Left ventricle myocardium inferior (tissue), 1 donor: ENCODE measurements at regions of chr11 and their contacts with region 1.

Region 1: GRCh38 chr11:4697585-4697984 is at the start of gene OR51E2:
- DNase-seq: no peak
- H3K4me3 ChIP-seq: no peak within 1 kb of the TSS
- H3K27ac ChIP-seq: no peak within 1 kb of the TSS
- H3K4me1 ChIP-seq: peaks cover 3% of the 10 kb centered on the region
- H3K27me3 ChIP-seq: no peaks in the 10 kb centered on the region
- CTCF ChIP-seq: no peak
- total RNA-seq, gene OR51E2: not detected

Region 2: GRCh38 chr11:4643076-4643475 is 54.5 kb before region 1 on chr11:
- intact Hi-C with region 1: loop called (anchors 10 kb)
- DNase-seq: peak; percentile 43
- H3K4me3 ChIP-seq: peak overlapping the region; percentile 62
- H3K27ac ChIP-seq: peak overlapping the region; percentile 89
- H3K4me1 ChIP-seq: peaks cover 65% of the 10 kb centered on the region
- H3K27me3 ChIP-seq: no peaks in the 10 kb centered on the region
- CTCF ChIP-seq: no peak